ENCODE measurements at regions of chr4 and their contacts with region 1.

Region 1: DNA sequence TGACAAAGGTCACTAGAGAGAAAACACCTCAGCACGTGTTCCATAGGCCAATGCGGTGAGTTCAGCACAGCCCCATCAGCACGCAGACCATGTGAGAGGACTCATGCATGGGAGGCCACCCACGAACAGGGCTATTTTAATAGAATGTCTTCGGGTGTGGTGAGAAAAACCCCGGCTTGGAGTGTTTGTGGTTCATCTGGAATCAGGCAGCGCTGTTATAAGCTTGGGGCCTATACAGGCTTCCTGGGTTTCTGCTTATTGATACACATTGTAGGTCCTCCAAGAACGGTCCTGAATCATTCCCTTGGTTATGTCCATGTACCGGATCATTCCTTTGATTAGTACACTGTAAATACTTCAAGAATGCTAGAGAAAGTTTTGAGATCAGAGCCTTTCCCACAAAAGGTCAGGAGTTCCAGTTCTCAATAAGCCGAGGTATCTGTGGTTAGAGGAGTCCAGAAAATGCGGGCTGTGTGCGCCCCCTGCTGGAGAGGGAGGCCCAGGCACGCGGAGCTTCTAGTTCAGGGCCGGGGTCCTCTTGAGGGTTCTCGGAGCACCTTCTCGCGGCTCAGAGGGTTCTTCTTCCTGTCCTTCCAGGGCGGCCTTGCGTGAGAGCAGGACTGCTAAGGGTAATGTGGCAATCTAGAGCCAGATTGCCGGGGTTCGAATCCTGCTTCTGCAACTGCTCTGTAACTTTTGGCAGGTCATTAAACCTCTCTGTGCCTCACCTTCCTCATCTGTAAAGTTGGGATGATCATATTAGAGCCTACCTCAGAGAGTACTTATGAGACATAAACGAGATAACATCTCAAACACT is 51.8 kb downstream of the TLR10 start:
- DNase-seq: peak; percentile 81
- CTCF ChIP-seq: peak; percentile 87

Region 2: GRCh38 chr4:38562751-38563198 is 168.3 kb before region 1 on chr4:
- CTCF ChIA-PET with region 1: no interaction called
- POLR2A ChIA-PET with region 1: no interaction called
- DNase-seq: no peak
- CTCF ChIP-seq: no peak

Region 3: DNA sequence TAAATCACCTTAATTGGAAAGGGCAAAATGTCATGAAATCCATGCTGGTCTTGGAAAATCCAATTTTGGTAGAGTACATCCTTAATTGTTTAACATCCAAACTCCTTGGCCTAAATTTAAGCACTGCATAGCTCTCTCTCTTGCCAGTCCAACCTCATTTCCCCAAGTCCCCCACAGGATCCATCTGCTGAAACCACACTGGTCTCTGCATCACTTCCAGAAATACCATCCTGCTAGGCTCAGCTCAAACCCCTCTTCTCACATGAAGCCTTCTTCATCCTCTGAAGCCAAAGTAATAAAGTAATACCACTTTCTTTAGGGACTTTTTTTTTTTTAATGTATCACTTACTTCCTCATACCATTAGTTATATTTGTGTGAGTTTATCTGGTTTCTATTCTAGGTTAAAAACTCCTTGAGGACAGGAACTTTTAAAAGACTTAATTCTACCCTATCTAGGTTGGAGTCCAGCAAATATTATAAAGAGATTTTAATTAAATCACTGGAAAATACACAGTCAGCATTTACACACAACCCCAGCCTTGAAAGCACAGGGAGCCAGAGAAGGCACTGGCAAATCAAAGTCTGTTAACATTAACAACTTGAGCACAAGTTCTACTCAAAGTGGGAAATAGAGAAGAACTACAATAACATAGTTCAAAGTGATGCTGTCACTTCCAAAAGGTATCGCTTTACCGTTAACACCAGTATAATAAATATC is 83.8 kb before region 1 on chr4:
- CTCF ChIA-PET with region 1: no interaction called
- POLR2A ChIA-PET with region 1: no interaction called
- DNase-seq: no peak
- CTCF ChIP-seq: no peak

Region 4: DNA sequence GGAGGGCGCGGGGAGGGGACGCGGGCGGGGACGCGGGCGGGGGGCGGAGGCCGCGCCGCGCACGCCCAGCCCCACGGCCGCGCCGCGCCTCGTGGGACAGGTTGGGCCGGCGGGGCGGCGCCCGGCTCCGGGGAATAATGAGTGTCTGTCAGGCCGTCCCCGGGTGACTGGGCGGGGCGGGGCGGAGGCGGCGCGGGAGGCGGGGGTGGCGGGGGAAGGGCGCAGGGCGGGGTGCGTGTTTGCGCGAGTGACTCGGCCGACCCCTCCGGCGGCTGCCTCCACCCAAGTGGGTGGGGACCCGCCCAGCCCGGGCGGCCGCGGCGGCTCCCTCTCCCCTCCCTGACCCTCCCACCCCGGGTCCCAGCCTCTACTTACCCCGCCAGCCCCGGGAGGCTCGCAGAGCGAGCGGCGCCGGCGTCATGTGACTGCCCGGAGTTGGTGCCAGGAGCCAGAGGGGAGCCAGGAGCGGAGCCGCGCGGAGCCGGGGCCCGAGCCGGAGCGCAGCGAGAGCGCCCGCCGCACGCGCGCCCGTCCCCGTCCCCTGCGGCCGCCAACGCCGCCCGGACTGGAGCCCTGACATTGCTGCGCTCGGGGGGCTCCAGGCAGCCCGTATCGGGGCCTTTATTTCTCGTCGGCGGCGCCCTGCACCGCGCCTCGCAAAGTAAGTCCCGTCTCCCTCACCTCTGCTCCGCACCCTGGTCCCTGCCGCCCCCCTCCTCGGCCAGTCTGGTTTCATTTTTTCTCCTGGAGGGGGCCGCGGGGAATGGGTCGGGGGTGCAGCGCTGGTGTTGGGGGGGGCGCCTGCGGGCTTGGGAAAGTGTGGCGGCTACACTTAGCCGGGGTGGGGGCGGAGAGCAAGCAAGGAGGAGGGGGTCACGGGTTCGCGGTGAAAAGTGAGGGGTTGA is 67.0 kb before region 1 on chr4 and contains the start of gene KLF3:
- CTCF ChIA-PET with region 1: no interaction called
- POLR2A ChIA-PET with region 1: no interaction called
- DNase-seq: peak; percentile 85
- CTCF ChIP-seq: no peak

Region 5: DNA sequence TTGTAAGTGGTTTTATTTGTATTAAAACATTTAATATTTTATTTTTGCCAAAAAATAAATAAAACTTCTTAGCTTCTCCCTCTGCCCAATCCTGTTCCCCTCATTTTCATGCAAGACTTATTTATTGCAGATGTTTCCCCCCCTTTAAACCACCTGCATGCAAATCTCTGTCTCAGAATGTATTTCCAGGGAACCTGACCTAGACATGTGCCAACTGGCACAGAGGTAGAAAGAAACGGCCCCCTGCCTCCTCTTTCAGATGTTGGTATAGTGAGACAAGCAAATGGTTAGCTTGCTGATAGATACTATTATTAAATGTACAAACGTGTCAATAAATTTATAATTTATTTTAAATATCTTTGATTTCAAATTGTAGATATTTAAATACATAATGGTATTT is 20.0 kb before region 1 on chr4:
- CTCF ChIA-PET with region 1: interaction called, 11 read pairs
- POLR2A ChIA-PET with region 1: no interaction called
- DNase-seq: no peak
- CTCF ChIP-seq: no peak

Region 6: GRCh38 chr4:38743866-38744265 is 12.8 kb after region 1 on chr4:
- CTCF ChIA-PET with region 1: interaction called, 43 read pairs
- POLR2A ChIA-PET with region 1: no interaction called
- DNase-seq: no peak
- CTCF ChIP-seq: no peak

Region 7: GRCh38 chr4:38791010-38791409 is 60.0 kb after region 1 on chr4:
- CTCF ChIA-PET with region 1: no interaction called
- POLR2A ChIA-PET with region 1: no interaction called
- DNase-seq: no peak
- CTCF ChIP-seq: no peak

Measured in GM10248 (cell line).